Caco-2 (cell line): ENCODE measurements at regions of chr1 and their contacts with region 1.

Region 1: DNA sequence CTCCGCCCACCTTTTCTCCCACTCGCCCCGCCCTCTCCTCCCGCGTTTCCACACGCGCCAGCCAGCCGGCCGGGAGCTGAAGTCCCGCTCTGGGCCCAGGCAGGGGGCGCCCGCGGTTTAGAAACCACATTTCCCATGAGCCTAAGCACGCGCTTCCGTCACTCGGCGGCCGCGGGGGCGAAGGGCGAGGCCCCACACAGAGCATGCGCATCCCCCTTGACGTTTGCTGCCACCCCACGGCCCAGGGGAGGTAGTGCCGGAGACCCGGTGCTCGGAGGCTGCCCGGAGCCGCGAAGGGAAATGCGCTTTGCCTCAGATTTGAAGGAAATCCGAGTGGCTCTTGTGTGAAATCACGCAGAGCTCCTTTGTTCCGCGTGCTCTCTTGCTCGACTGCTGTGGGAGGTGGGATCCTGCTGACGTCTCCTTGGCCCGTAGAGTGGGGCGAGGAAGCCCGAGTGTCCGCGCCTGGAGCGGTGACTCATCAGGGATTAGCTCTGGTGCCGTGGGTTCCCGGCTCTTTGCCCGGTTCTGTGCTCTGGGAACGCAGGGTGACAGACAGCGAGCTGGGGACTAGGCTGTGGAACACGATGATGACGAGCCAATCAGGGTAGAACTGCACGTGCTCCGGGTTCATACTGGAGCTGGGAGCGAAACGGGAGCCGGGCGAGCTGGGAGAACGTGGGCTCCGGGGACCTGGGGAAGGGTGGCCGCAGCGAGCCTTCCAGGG is 407 bp upstream of the B3GALNT2 start:
- DNase-seq: peak; percentile 98 to 99
- H3K4me3 ChIP-seq: peak overlapping the region; percentile 99
- H3K4me3 Mint-ChIP-seq: peak overlapping the region; percentile 100
- H3K27ac Mint-ChIP-seq: peak overlapping the region; percentile 100
- H3K4me1 ChIP-seq: peaks cover 17% of the 10 kb centered on the region
- H3K4me1 Mint-ChIP-seq: peaks cover 9% of the 10 kb centered on the region
- H3K27me3 ChIP-seq: no peaks in the 10 kb centered on the region
- H3K27me3 Mint-ChIP-seq: peaks cover 2% of the 10 kb centered on the region
- CTCF ChIP-seq: peak; percentile 87 to 94

Region 2: DNA sequence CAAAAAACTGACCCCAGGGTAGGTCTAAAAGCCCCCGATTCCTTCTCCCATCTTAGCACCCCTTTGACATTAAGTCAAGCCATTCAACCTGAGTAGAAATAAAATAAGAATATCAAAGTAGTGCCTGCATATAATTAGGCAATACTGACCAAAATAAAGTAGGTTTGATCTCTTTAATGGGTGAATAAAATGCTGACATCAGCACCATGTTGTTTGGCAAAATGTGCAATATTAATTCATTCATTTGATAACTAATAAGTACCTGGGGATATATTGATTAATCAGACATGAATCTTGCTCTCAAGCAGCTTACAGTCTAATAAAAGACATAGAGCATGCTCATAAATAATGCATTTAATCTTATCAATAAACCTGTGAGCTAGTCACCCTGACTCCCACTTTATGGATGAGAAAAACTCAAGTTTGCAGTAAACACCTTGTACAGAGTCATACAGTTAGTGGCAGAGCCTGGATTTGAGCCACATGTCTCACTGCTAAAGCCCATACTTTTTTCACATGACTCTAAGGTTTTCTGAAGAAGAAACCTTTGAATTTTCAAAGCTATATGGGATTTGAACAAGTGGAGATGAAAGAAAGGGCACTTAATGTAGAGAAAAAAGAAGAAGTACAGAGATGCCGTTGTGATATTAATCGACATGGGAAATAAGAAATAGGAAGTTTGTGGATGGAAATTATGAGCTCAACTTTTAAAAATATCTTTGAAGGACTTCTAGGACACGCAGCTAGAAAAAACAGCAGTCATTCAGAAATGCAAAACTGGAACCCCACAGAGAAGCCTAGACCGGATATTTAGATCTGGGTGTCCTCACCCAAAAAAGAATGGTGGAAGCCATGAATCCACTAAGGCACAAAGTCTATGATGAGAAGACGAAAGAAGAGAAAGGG is 560.0 kb before region 1 on chr1:
- CTCF ChIA-PET with region 1: no interaction called
- POLR2A ChIA-PET with region 1: no interaction called
- intact Hi-C with region 1: no loop called
- DNase-seq: no peak
- H3K4me3 ChIP-seq: no peak overlapping the region
- H3K4me3 Mint-ChIP-seq: no peak overlapping the region
- H3K27ac Mint-ChIP-seq: no peak overlapping the region
- H3K4me1 ChIP-seq: peaks cover 4% of the 10 kb centered on the region; the same call in 1 of the 2 replicates
- H3K4me1 Mint-ChIP-seq: no peaks in the 10 kb centered on the region
- H3K27me3 ChIP-seq: no peaks in the 10 kb centered on the region
- H3K27me3 Mint-ChIP-seq: no peaks in the 10 kb centered on the region
- CTCF ChIP-seq: no peak

Region 3: GRCh38 chr1:235128456-235129328 is 376.0 kb before region 1 on chr1 and contains the start of gene TOMM20:
- CTCF ChIA-PET with region 1: no interaction called
- POLR2A ChIA-PET with region 1: no interaction called
- intact Hi-C with region 1: loop called (anchors 10 kb)
- DNase-seq: peak; percentile 98
- H3K4me3 ChIP-seq: peak within 1 kb of the TSS; percentile 81
- H3K4me3 Mint-ChIP-seq: peak within 1 kb of the TSS; percentile 100
- H3K27ac Mint-ChIP-seq: peak within 1 kb of the TSS; percentile 99
- H3K4me1 ChIP-seq: peaks cover 21% of the 10 kb centered on the region
- H3K4me1 Mint-ChIP-seq: peaks cover 15% of the 10 kb centered on the region
- H3K27me3 ChIP-seq: no peaks in the 10 kb centered on the region
- H3K27me3 Mint-ChIP-seq: no peaks in the 10 kb centered on the region
- CTCF ChIP-seq: no peak
- total RNA-seq, gene TOMM20: 131 and 137 TPM in 2 replicates

Region 4: DNA sequence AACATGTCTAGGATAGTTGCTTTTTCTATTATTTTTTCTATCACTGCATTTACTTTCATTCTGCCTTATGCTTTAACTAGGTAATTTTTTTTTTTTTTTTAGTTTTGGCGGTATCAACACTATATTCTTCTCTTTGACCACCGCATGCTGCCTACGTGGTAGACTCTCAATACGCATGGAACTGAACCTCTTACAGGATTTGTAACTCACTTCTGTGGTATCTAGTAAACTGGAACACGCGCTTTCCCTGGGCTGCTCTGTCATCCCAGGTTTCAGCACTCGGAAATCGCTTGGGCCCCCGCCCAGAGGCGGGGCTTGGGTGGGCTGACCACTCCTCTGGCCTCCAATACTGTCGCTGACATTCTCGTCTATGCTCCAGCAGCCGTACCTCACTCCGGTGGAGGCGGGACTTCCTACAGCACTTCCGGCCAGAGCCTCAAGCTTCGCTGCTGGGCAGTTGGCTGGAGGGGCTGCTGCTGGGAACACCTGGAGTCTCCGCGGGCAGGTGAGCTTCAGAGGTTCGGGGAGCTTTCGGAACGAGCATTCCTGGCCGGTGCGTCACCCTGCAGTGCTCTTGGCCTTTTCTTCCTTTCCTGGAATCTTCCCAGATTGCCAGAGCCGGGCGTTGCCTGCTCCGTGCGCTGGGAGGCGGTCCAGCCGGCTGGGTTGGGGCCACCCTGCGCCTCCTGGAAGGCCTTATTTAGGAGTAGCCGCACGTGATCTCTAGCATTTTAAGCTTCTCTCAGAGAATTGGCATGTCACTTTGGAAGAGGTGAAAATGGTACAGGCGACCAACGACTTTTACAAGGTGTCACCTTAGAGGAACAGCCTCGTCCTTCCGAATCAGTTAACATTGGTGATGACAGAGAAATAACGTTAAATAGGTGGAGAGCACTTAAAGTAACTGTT is 137.4 kb before region 1 on chr1 and contains the start of gene TBCE:
- CTCF ChIA-PET with region 1: no interaction called
- POLR2A ChIA-PET with region 1: interaction called, 8 read pairs
- intact Hi-C with region 1: loop called (anchors 1 kb)
- DNase-seq: peak; percentile 99
- H3K4me3 ChIP-seq: peak within 1 kb of the TSS; percentile 62
- H3K4me3 Mint-ChIP-seq: peak within 1 kb of the TSS; percentile 99
- H3K27ac Mint-ChIP-seq: peak within 1 kb of the TSS; percentile 98
- H3K4me1 ChIP-seq: peaks cover 12% of the 10 kb centered on the region; the same call in 1 of the 2 replicates
- H3K4me1 Mint-ChIP-seq: peaks cover 22% of the 10 kb centered on the region
- H3K27me3 ChIP-seq: no peaks in the 10 kb centered on the region
- H3K27me3 Mint-ChIP-seq: no peaks in the 10 kb centered on the region
- CTCF ChIP-seq: no peak
- total RNA-seq, gene TBCE: 38.5 and 40.0 TPM in 2 replicates

Region 5: DNA sequence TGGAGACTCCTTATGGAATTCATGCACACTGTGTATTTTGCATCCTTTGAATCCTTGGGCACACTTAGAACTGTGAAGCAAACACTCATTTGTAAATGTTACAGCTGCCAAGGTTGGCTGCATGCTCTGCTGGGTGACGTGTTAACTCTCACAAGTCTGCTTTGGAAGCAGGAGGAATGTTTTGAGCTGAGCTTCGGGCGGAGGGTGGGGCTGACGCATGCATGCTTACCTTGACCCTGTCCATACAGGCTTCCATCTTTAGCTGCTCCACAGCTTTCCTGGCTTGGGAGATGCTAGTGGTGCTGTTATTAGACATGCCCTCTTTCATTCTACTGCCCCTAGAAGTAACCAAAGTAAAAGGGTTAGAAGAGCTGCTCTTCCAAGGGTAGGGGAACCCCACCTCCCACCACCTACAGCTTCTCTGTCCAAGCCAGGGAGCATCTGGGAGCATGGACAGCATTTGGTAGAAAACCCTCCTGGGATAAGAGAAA is 78.9 kb after region 1 on chr1:
- CTCF ChIA-PET with region 1: no interaction called
- POLR2A ChIA-PET with region 1: no interaction called
- intact Hi-C with region 1: no loop called
- DNase-seq: no peak
- H3K4me3 ChIP-seq: no peak overlapping the region
- H3K4me3 Mint-ChIP-seq: no peak overlapping the region
- H3K27ac Mint-ChIP-seq: no peak overlapping the region
- H3K4me1 ChIP-seq: no peaks in the 10 kb centered on the region
- H3K4me1 Mint-ChIP-seq: no peaks in the 10 kb centered on the region
- H3K27me3 ChIP-seq: no peaks in the 10 kb centered on the region
- H3K27me3 Mint-ChIP-seq: peaks cover 3% of the 10 kb centered on the region
- CTCF ChIP-seq: no peak

Region 6: DNA sequence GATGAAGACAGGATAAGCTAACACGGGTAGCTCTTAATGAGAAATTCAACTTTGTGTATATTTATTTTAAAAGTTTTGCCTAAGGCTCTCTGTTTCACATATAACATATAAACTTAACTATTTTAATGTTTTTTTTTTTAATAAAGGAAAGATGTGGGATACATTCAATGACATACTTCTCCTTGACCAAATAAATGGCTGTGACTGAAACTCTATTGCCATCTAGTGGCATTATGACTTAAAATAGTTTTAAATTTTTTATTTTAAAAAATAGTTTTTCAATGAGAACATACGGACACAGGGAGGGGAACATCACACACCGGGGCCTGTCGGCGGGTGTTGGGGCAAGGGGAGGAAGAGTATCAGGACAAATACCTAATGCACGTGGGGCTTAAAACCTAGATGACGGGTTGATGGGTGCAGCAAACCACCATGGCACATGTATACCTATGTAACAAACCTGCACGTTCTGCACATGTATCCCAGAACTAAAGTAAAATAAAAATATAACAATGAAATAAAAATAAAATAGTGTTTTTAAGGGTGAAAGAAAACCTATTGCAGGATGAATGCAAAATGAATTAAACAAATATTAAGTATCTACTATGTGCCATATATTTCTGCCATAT is 278.6 kb after region 1 on chr1:
- CTCF ChIA-PET with region 1: no interaction called
- POLR2A ChIA-PET with region 1: interaction called, 4 read pairs
- intact Hi-C with region 1: loop called (anchors 2 kb)
- DNase-seq: peak in 1 of 2 experiments; percentile 26
- H3K4me3 ChIP-seq: no peak overlapping the region
- H3K4me3 Mint-ChIP-seq: no peak overlapping the region
- H3K27ac Mint-ChIP-seq: no peak overlapping the region
- H3K4me1 ChIP-seq: no peaks in the 10 kb centered on the region
- H3K4me1 Mint-ChIP-seq: no peaks in the 10 kb centered on the region
- H3K27me3 ChIP-seq: no peaks in the 10 kb centered on the region
- H3K27me3 Mint-ChIP-seq: no peaks in the 10 kb centered on the region
- CTCF ChIP-seq: peak; percentile 41 to 62

Region 7: GRCh38 chr1:235843461-235843961 is 338.9 kb after region 1 on chr1:
- CTCF ChIA-PET with region 1: interaction called, 12 read pairs
- POLR2A ChIA-PET with region 1: interaction called, 7 read pairs
- intact Hi-C with region 1: no loop called
- DNase-seq: peak in 1 of 2 experiments; percentile 35
- H3K4me3 ChIP-seq: no peak overlapping the region
- H3K4me3 Mint-ChIP-seq: no peak overlapping the region
- H3K27ac Mint-ChIP-seq: no peak overlapping the region
- H3K4me1 ChIP-seq: no peaks in the 10 kb centered on the region
- H3K4me1 Mint-ChIP-seq: peaks cover 12% of the 10 kb centered on the region
- H3K27me3 ChIP-seq: no peaks in the 10 kb centered on the region
- H3K27me3 Mint-ChIP-seq: peaks cover 4% of the 10 kb centered on the region
- CTCF ChIP-seq: peak; percentile 55 to 69

Region 8: DNA sequence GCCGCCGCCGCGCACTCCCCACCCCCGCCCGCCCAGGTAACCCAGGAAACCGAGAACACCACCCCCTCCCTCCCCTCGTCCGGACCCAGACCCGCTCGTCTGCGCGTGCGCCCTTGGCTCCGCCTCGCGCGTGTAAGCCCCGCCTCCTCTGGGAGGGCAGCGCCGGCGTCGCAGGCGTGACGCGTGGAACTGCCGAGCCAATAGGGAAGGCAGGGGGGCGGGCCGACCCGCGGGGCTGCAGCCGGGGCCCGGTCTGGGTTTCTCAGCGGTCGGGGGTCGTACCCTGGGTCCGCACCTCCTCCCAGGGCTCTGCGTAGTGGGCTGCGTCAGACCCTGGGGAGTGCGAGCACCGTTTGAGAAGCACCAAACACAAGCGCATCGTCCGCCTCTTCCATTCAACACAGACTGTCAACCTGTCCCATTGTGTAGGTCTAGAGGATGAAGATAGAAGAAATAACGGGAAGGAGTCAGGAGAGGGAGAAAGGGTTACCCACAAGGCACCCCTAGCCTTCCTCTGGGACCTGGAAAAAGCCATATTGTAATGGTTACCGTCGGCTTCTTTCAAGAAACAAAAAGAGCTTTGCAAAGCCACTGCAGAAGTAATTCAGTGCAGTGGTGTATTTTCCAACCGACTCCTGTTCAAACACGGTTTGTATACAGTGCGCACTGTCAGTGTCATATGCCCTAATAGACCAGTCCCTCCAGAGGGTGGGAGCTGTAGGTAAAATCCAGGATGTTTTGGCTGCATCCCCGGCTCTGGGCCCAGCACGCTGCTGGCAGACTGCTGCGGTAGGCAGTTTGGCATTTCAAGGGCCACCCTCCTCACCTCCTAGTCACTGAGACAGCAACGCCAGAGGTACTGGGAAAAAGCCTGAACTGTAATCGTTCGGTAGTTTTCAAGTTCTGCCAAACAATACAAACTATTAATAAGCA is 362.5 kb after region 1 on chr1:
- CTCF ChIA-PET with region 1: interaction called, 4 read pairs
- POLR2A ChIA-PET with region 1: no interaction called
- intact Hi-C with region 1: loop called (anchors 10 kb)
- DNase-seq: peak; percentile 93 to 98
- H3K4me3 ChIP-seq: peak overlapping the region; percentile 65
- H3K4me3 Mint-ChIP-seq: peak overlapping the region; percentile 98
- H3K27ac Mint-ChIP-seq: peak overlapping the region; percentile 48
- H3K4me1 ChIP-seq: peaks cover 4% of the 10 kb centered on the region; the same call in 1 of the 2 replicates
- H3K4me1 Mint-ChIP-seq: peaks cover 6% of the 10 kb centered on the region
- H3K27me3 ChIP-seq: no peaks in the 10 kb centered on the region
- H3K27me3 Mint-ChIP-seq: peaks cover 2% of the 10 kb centered on the region
- CTCF ChIP-seq: no peak